Adrenal gland (tissue), 19 donors: ENCODE measurements at regions of chr16 and their contacts with region 1.

Region 1: GRCh38 chr16:66735891-66736290 is 15.5 kb downstream of the DYNC1LI2 start:
- DNase-seq: peak in 1 of 7 donors; percentile 41
- H3K4me3 ChIP-seq: no peak overlapping the region
- H3K27ac ChIP-seq: no peak overlapping the region
- H3K4me1 ChIP-seq: peaks cover 9 to 19% of the 10 kb centered on the region in 2 donors
- H3K27me3 ChIP-seq: no peaks in the 10 kb centered on the region
- CTCF ChIP-seq: no peak
- POLR2A ChIP-seq: no peak

Region 2: GRCh38 chr16:66474750-66475199 is 261.1 kb before region 1 on chr16:
- intact Hi-C with region 1: no loop called
- DNase-seq: peak in 1 of 7 donors; percentile 45
- H3K4me3 ChIP-seq: no peak overlapping the region
- H3K27ac ChIP-seq: no peak overlapping the region
- H3K4me1 ChIP-seq: no peaks in the 10 kb centered on the region
- H3K27me3 ChIP-seq: no peaks in the 10 kb centered on the region
- CTCF ChIP-seq: no peak
- POLR2A ChIP-seq: no peak

Region 3: DNA sequence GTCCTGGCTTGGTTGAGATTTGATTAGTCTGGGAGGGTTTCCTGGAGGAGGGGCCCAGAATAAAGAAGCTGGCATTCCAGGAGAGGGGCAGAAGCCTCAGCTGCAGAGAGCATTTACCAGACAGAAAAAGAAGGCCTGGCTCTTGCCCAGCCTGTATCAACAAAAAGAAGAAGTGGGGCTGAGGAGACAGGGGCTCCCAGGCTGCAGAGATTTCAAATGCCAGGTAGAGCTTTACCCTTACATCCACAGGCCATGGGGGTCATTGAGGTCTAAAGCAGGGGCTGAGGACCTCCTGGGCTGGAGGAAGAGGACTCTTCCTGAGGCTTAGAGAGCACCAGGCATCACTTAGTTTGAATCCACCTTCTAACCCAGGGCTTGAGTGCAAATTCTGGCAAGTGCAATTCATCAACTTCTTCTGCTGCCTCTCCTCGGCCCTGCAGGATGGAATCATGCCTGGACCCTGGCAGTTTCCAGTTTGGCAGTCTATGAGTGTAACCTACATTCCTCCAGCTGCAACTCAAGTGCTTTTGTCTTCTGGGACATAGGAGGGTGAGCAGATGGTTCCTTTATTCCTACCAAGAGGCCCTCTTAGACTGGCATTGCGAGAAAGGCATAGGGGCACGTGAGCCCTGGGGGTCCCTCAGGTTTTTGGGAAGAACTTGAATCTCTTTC is 123.6 kb after region 1 on chr16:
- intact Hi-C with region 1: loop called in 1 of 2 experiments (anchors 10 kb)
- DNase-seq: no peak
- H3K4me3 ChIP-seq: no peak overlapping the region
- H3K27ac ChIP-seq: no peak overlapping the region
- H3K4me1 ChIP-seq: peaks cover 0 to 5% of the 10 kb centered on the region in 2 donors
- H3K27me3 ChIP-seq: no peaks in the 10 kb centered on the region
- CTCF ChIP-seq: no peak
- POLR2A ChIP-seq: no peak